Heart left ventricle (tissue), 16 donors: ENCODE measurements at regions of chr3 and their contacts with region 1.

Region 1: GRCh38 chr3:65170390-65171042 is 482.7 kb upstream of the ADAMTS9 start:
- DNase-seq: peak; percentile 84 to 95 (median 86)
- ATAC-seq: peak; percentile 79 to 97 (median 94)
- H3K4me3 ChIP-seq: no peak overlapping the region
- H3K27ac ChIP-seq: peak overlapping the region in 11 of 12 donors; percentile 40 to 85 (median 75)
- H3K4me1 ChIP-seq: peaks cover 0 to 27% (median 17%) of the 10 kb centered on the region in 12 donors
- H3K27me3 ChIP-seq: no peaks in the 10 kb centered on the region
- CTCF ChIP-seq: peak; percentile 21 to 65 (median 52)
- POLR2A ChIP-seq: no peak

Region 2: GRCh38 chr3:64539451-64540196 is 630.9 kb before region 1 on chr3:
- intact Hi-C with region 1: loop called in 7 of 10 experiments (anchors 5 to 10 kb)
- DNase-seq: peak in 3 of 5 donors; percentile 36 to 50 (median 47)
- ATAC-seq: peak; percentile 42 to 80 (median 75)
- H3K4me3 ChIP-seq: no peak overlapping the region
- H3K27ac ChIP-seq: peak overlapping the region in 1 of 12 donors; percentile 69
- H3K4me1 ChIP-seq: peaks cover 0 to 15% (median 7%) of the 10 kb centered on the region in 12 donors
- H3K27me3 ChIP-seq: no peaks in the 10 kb centered on the region
- CTCF ChIP-seq: no peak
- POLR2A ChIP-seq: no peak

Region 3: DNA sequence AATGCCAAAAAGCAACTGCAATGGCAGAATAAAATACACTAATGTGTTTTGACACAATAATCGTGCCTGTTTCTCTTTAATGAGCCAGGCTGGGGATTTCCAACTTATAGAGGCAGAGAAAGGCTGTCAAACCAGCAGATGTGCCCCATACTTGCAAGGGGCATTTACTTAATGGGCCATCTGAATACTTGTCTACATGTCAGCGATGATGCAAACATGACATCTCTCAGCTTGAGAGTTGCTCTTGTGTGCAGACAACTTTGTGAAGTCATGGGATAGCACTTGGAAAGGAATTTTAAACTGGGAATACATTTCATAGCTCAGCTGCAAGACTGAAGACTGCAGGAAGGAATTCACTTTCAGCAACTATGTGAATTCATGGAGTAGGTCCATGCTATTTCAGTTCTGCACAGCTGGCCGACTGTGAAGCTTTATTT is 355.3 kb before region 1 on chr3:
- intact Hi-C with region 1: loop called in 1 of 10 experiments (anchors 10 kb)
- DNase-seq: peak in 3 of 5 donors; percentile 21 to 30 (median 23)
- ATAC-seq: peak; percentile 79 to 86 (median 82)
- H3K4me3 ChIP-seq: no peak overlapping the region
- H3K27ac ChIP-seq: peak overlapping the region; percentile 6 to 65 (median 43)
- H3K4me1 ChIP-seq: peaks cover 5 to 42% (median 22%) of the 10 kb centered on the region in 12 donors
- H3K27me3 ChIP-seq: no peaks in the 10 kb centered on the region
- CTCF ChIP-seq: peak in 1 of 12 donors; percentile 15
- POLR2A ChIP-seq: no peak

Region 4: DNA sequence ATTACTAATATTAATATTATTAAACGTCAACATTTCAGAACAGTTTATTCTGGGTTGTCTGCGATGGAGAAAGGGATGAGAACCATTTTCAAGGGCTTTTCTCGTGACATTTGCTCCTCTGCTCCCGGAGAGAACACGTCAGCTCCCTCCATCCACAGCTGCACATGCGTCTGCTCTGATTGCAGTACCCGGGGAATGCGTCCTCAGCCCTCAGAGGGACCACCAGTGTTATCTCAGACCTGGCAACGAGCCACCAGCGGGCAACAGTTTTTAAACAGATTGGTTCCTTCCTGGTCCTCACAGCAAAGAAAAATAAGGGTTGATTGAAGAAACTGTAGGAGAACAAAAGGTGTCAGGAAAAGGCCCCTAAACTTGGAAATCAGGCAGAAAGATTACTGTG is 280.5 kb before region 1 on chr3:
- intact Hi-C with region 1: loop called in 1 of 10 experiments (anchors 5 kb)
- DNase-seq: peak; percentile 72 to 83 (median 81)
- ATAC-seq: peak; percentile 46 to 90 (median 74)
- H3K4me3 ChIP-seq: no peak overlapping the region
- H3K27ac ChIP-seq: peak overlapping the region; percentile 28 to 83 (median 62)
- H3K4me1 ChIP-seq: peaks cover 0 to 46% (median 30%) of the 10 kb centered on the region in 12 donors
- H3K27me3 ChIP-seq: no peaks in the 10 kb centered on the region
- CTCF ChIP-seq: no peak
- POLR2A ChIP-seq: no peak

Region 5: DNA sequence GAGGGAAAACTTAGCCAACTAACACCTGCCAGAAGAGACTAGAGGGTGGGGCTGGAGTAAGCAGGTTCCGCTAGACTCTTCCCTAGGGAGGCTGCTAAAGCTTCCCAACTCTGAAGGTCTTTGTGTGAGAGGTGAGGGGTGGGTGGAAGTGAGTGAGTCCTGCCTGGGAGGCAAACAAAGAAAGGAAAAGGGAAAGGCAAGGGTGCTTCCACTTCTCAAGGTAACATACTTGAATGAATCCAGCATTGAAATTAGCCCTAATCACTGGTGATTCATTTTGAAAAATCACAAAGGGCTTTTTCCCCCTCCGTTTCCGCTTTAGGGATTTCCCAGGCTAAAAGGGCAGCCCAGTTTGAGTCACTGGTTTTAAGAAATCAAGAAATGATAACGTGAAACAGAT is 262.2 kb before region 1 on chr3:
- intact Hi-C with region 1: loop called in 2 of 10 experiments (anchors 10 kb)
- DNase-seq: peak in 3 of 5 donors; percentile 52 to 66 (median 65)
- ATAC-seq: peak; percentile 85 to 96 (median 88)
- H3K4me3 ChIP-seq: no peak overlapping the region
- H3K27ac ChIP-seq: peak overlapping the region in 11 of 12 donors; percentile 16 to 81 (median 67)
- H3K4me1 ChIP-seq: peaks cover 4 to 61% (median 30%) of the 10 kb centered on the region in 12 donors
- H3K27me3 ChIP-seq: no peaks in the 10 kb centered on the region
- CTCF ChIP-seq: no peak
- POLR2A ChIP-seq: no peak

Region 6: DNA sequence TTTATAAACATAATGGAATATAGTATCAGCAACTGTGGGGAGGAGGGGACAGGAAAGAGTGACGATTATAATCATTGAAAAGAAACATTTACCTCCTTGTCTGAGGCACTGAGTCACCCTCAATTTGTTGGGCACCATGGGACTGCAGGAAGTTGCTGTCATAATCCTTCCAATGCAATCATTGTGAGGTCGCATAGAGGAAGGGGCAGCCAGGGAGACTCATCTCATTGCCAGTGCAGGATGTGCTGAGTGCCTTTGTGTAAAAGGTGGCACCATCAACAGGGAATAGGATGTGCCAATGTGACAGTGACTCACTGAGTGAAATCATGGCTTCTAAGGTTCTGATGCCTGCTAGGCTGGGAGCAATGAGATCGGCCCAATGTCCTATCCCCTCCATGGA is 182.3 kb before region 1 on chr3:
- intact Hi-C with region 1: loop called in 1 of 10 experiments (anchors 10 kb)
- DNase-seq: no peak
- ATAC-seq: peak in 1 of 4 donors; percentile 24
- H3K4me3 ChIP-seq: no peak overlapping the region
- H3K27ac ChIP-seq: no peak overlapping the region
- H3K4me1 ChIP-seq: peaks cover 0 to 16% (median 6%) of the 10 kb centered on the region in 12 donors
- H3K27me3 ChIP-seq: no peaks in the 10 kb centered on the region
- CTCF ChIP-seq: no peak
- POLR2A ChIP-seq: no peak